ENCODE measurements at regions of chr1 and their contacts with region 1.

Region 1: DNA sequence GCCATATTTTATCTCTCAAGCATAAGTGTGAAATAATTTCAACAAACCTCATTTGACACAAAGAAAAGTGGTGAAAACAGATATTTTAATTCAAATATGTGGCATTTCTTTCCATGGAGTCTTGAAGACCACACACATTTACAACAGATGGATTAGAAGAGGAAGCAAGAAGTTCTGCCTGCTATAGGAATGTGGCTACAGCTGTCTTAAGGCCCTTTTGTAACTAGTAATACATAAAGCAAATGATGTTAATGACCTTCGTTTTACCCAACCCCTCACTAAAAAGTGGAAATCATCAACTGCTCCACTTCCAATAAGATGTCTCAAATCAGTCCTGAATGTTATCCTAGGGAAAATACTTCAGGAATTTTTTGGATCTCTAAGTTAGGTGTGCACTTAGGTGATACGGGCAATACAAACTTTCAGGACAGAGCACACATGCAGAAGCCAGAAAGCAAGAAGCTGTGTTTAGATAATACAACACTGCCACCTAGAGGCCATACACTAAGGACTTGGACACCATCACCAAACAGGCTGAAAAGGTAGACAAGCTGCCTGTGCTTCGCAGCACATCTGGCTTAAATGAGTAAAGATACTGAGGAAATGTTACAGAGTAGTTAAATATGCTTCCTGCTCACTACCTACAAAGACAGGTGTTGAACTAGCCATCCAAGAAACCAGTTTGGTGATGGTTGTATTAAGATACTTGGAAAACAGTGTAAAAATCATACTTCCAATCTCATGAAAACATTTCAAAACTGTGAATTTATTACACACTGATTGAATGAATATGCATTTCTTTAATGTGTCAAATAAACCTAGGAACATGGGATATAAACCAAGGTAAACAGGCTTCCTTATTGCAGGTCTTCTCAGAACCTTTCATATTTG is 24.4 kb downstream of the RRAGC start:
- DNase-seq: peak; percentile 19
- H3K4me3 ChIP-seq: no peak overlapping the region
- H3K27ac ChIP-seq: no peak overlapping the region
- H3K4me1 ChIP-seq: no peaks in the 10 kb centered on the region
- H3K27me3 ChIP-seq: peaks cover 3% of the 10 kb centered on the region
- CTCF ChIP-seq: peak; percentile 71 to 79 (median 74)
- EP300 ChIP-seq: no peak
- POLR2A ChIP-seq: no peak

Region 2: DNA sequence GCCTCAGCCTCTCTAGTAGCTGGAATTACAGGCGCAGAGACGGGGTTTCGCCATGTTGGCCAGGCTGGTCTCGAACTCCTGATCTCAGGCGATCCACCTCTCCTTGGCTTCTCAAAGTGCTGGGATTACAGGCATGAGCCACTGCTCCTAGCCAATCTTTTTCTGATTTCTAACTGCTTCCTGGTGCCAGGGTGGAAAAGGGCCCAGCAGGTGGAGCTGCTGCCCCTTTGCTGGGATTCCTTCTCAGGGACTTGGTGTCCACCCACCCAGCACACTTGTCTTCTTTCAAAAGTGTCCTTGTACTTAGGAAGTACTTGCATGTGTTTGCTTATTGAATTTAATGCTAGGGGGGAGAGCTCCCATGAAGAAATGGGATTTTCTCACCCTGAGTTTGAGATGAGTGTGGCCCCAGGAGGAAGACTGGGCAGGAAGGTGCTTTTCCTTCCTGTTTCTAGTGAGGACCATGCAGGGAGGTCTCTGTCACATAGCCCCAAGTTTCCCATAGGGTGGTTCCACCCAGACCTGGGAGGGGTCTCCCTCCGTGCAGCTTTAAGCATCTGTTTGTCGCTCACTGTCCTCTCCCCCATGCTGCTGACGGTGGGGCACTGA is 808.5 kb before region 1 on chr1:
- in situ Hi-C with region 1: loop called in 2 of 4 experiments (anchors 10 to 25 kb)
- intact Hi-C with region 1: no loop called
- DNase-seq: peak; percentile 26
- H3K4me3 ChIP-seq: no peak overlapping the region
- H3K27ac ChIP-seq: no peak overlapping the region
- H3K4me1 ChIP-seq: peaks cover 14 to 20% (median 18%) of the 10 kb centered on the region in 4 donors
- H3K27me3 ChIP-seq: peaks cover 8% of the 10 kb centered on the region
- CTCF ChIP-seq: peak; percentile 26 to 45 (median 39)
- EP300 ChIP-seq: no peak
- POLR2A ChIP-seq: no peak

Region 3: DNA sequence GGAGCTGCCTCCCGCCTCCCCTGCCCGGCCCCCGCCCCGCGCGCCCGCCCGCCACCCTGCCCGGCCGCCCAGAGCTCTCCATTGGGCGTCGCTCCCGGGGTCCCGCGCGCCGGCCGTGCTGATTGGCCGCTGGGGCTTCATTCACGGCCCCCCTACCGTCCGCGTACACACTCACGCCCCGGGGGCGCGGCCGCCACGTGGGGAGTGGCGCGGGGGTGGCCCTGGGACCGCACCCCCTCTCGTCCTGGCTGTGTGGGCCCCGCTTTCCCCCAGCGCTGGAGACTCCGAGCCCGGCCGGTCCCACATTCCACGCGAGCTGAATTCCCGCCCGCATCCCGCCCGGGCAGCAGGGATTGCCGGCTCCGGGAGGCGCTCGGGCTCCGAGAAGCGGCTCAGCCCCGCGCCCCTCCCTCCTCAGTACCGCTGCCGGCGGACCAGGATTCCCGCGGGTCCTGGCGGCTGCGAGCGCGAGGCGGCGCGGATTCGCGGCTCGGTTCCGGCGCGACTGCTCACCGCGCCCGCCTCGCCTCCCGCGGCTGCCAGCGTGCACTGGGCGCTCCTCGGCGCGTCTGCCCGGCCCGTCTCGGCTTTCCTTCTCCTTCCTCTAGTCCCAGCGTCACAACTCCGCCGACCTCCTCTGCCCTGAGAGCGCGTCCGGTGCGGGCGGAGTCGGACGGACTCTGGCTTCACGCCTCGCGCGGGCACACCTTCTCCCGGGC is 788.1 kb before region 1 on chr1:
- in situ Hi-C with region 1: loop called in 1 of 4 experiments (anchors 25 kb)
- intact Hi-C with region 1: no loop called
- DNase-seq: peak; percentile 80
- H3K4me3 ChIP-seq: peak overlapping the region; percentile 27 to 66 (median 46)
- H3K27ac ChIP-seq: peak overlapping the region; percentile 29 to 68 (median 46)
- H3K4me1 ChIP-seq: peaks cover 14 to 26% (median 22%) of the 10 kb centered on the region in 4 donors
- H3K27me3 ChIP-seq: peaks cover 72% of the 10 kb centered on the region
- CTCF ChIP-seq: no peak
- EP300 ChIP-seq: no peak
- POLR2A ChIP-seq: no peak

Region 4: DNA sequence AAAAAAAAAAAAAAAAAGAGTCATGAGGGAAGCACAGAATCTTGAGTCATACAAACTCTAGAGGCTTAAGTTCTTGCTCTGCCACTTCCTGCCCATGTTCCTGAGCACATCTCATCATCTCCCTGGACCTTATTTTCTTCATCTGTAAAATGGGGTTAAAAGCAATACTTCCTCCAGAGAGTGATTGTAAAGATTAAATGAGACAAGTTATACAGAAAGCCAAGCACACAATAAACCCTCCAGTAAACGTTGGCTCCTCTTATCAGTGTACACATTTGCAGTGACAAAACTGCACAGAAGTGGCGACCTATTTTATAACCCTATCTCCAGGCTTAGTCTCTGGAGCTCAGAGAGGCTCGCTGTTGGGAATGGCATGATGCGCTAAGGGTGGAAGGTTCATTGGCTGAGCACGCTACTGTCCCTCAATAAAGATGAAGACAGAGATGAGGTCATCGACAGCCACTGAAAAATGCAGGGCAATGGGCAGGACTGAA is 57.7 kb before region 1 on chr1:
- in situ Hi-C with region 1: no loop called
- intact Hi-C with region 1: no loop called
- DNase-seq: no peak
- H3K4me3 ChIP-seq: no peak overlapping the region
- H3K27ac ChIP-seq: no peak overlapping the region
- H3K4me1 ChIP-seq: no peaks in the 10 kb centered on the region
- H3K27me3 ChIP-seq: peaks cover 33% of the 10 kb centered on the region
- CTCF ChIP-seq: no peak
- EP300 ChIP-seq: no peak
- POLR2A ChIP-seq: no peak

Measured in transverse colon (tissue), 4 donors.